ENCODE measurements at regions of chr3 and their contacts with region 1.

Region 1: GRCh38 chr3:79351699-79352098 is 416.1 kb downstream of the ROBO1 start:
- DNase-seq: no peak
- ATAC-seq: no peak
- H3K4me3 Mint-ChIP-seq: no peak overlapping the region
- H3K27ac Mint-ChIP-seq: no peak overlapping the region
- H3K4me1 Mint-ChIP-seq: no peaks in the 10 kb centered on the region
- H3K27me3 Mint-ChIP-seq: no peaks in the 10 kb centered on the region

Region 2: DNA sequence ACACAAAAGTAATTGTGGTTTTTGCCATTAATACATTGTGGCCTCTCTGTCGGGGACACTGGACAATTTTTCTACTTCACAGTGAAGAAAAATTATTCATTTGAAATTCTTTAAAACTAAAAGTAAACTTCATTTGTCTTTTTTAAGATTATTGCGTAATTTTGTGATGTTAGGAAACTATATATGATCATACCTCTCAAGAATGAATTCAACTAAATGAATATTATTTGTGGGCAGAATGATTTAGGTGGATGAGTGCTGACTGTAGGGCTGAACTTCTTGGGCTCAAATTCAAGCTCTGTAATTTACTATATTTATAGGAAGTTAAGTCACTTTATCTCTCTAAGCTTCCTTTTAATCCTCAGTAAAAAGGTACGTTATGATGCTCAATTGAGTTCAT is 25.1 kb before region 1 on chr3:
- CTCF ChIA-PET with region 1: no interaction called
- POLR2A ChIA-PET with region 1: no interaction called
- intact Hi-C with region 1: no loop called
- DNase-seq: no peak
- ATAC-seq: no peak
- H3K4me3 Mint-ChIP-seq: no peak overlapping the region
- H3K27ac Mint-ChIP-seq: no peak overlapping the region
- H3K4me1 Mint-ChIP-seq: no peaks in the 10 kb centered on the region
- H3K27me3 Mint-ChIP-seq: no peaks in the 10 kb centered on the region

Region 3: GRCh38 chr3:79361748-79362378 is 10.2 kb after region 1 on chr3:
- CTCF ChIA-PET with region 1: interaction called, 10 read pairs
- POLR2A ChIA-PET with region 1: no interaction called
- intact Hi-C with region 1: no loop called
- DNase-seq: no peak
- ATAC-seq: no peak
- H3K4me3 Mint-ChIP-seq: no peak overlapping the region
- H3K27ac Mint-ChIP-seq: no peak overlapping the region
- H3K4me1 Mint-ChIP-seq: no peaks in the 10 kb centered on the region
- H3K27me3 Mint-ChIP-seq: no peaks in the 10 kb centered on the region

Region 4: GRCh38 chr3:79729096-79729495 is 377.4 kb after region 1 on chr3:
- CTCF ChIA-PET with region 1: no interaction called
- POLR2A ChIA-PET with region 1: no interaction called
- intact Hi-C with region 1: no loop called
- DNase-seq: no peak
- ATAC-seq: no peak
- H3K4me3 Mint-ChIP-seq: no peak overlapping the region
- H3K27ac Mint-ChIP-seq: no peak overlapping the region
- H3K4me1 Mint-ChIP-seq: no peaks in the 10 kb centered on the region
- H3K27me3 Mint-ChIP-seq: no peaks in the 10 kb centered on the region